Heart right ventricle (tissue), 16 donors: ENCODE measurements at regions of chr3 and their contacts with region 1.

Region 1: GRCh38 chr3:151227807-151228665 is 25.0 kb upstream of the GPR171 start:
- DNase-seq: peak; percentile 53 to 81
- ATAC-seq: peak; percentile 74 to 91 (median 86)
- H3K4me3 ChIP-seq: no peak overlapping the region
- H3K27ac ChIP-seq: peak overlapping the region in 9 of 10 donors; percentile 31 to 75 (median 65)
- H3K4me1 ChIP-seq: peaks cover 0 to 52% (median 19%) of the 10 kb centered on the region in 9 donors
- H3K27me3 ChIP-seq: no peaks in the 10 kb centered on the region
- CTCF ChIP-seq: peak; percentile 80 to 96 (median 91)

Region 2: GRCh38 chr3:151168269-151169094 is 59.6 kb before region 1 on chr3:
- intact Hi-C with region 1: loop called in 3 of 10 experiments (anchors 5 kb)
- DNase-seq: peak; percentile 78 to 83
- ATAC-seq: peak; percentile 61 to 87 (median 76)
- H3K4me3 ChIP-seq: no peak overlapping the region
- H3K27ac ChIP-seq: peak overlapping the region in 2 of 10 donors; percentile 13 to 79
- H3K4me1 ChIP-seq: peaks cover 0 to 42% (median 3%) of the 10 kb centered on the region in 9 donors
- H3K27me3 ChIP-seq: no peaks in the 10 kb centered on the region
- CTCF ChIP-seq: peak; percentile 34 to 88 (median 79)

Region 3: DNA sequence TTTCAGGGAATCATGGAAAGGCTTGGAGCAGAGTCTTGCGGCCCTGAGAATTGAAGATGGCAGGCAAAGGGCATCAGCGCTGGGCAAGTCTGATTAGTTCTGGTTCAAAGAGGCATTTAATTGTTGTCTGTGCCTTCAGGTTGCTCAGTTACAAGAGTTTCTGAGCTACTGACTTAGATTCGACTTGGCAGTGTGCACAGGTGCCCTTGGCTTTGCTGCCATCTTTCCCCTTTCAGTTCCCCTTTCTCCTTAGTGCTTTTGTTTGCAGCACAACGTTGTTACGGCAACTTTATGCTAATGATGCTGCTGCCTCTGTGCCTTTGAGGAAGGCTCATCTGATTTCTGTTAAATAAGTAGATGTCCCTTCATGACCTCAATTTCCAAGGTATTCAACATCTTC is 37.8 kb after region 1 on chr3:
- intact Hi-C with region 1: loop called in 1 of 10 experiments (anchors 5 kb)
- DNase-seq: peak in 1 of 2 donors; percentile 14
- ATAC-seq: peak in 6 of 8 donors; percentile 30 to 69 (median 50)
- H3K4me3 ChIP-seq: no peak overlapping the region
- H3K27ac ChIP-seq: peak overlapping the region in 3 of 10 donors; percentile 15 to 76 (median 53)
- H3K4me1 ChIP-seq: peaks cover 0 to 46% (median 5%) of the 10 kb centered on the region in 9 donors
- H3K27me3 ChIP-seq: no peaks in the 10 kb centered on the region
- CTCF ChIP-seq: no peak

Region 4: GRCh38 chr3:151282921-151283320 is 54.9 kb after region 1 on chr3:
- intact Hi-C with region 1: loop called (anchors 1 to 5 kb)
- DNase-seq: no peak
- ATAC-seq: peak in 6 of 8 donors; percentile 46 to 82 (median 58)
- H3K4me3 ChIP-seq: no peak overlapping the region
- H3K27ac ChIP-seq: peak overlapping the region in 5 of 10 donors; percentile 23 to 76 (median 63)
- H3K4me1 ChIP-seq: peaks cover 0 to 35% (median 9%) of the 10 kb centered on the region in 9 donors
- H3K27me3 ChIP-seq: no peaks in the 10 kb centered on the region
- CTCF ChIP-seq: peak; percentile 46 to 81 (median 70)

Region 5: GRCh38 chr3:151316267-151316991 is 88.4 kb after region 1 on chr3 and contains the start of gene GPR87:
- intact Hi-C with region 1: no loop called
- DNase-seq: no peak
- ATAC-seq: no peak
- H3K4me3 ChIP-seq: no peak within 1 kb of the TSS
- H3K27ac ChIP-seq: no peak within 1 kb of the TSS
- H3K4me1 ChIP-seq: peaks cover 0 to 25% (median 0%) of the 10 kb centered on the region in 9 donors
- H3K27me3 ChIP-seq: no peaks in the 10 kb centered on the region
- CTCF ChIP-seq: no peak
- total RNA-seq, gene GPR87: not detected

Region 6: DNA sequence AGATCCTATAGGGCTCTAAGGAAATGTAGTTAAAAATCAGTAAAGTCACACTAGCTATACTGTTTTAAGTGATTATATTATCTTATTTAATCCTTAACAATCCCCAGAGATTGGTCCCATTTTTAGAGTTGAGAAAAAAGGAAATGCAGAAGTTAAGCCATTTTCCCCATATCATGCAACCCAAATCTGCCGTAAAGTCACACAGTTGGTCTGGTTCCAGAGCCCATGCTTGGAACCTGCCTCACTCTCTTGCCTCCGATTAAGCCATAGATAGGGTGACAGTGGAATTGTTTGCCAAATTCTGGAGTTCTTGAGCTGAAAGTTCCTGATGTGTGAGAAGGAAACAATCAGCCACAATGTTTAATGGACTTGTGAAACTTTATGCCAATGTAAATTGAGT is 103.7 kb after region 1 on chr3:
- intact Hi-C with region 1: no loop called
- DNase-seq: no peak
- ATAC-seq: no peak
- H3K4me3 ChIP-seq: no peak overlapping the region
- H3K27ac ChIP-seq: peak overlapping the region in 1 of 10 donors; percentile 51
- H3K4me1 ChIP-seq: peaks cover 0 to 43% (median 0%) of the 10 kb centered on the region in 9 donors
- H3K27me3 ChIP-seq: no peaks in the 10 kb centered on the region
- CTCF ChIP-seq: no peak

Region 7: GRCh38 chr3:151918253-151919029 is 690.4 kb after region 1 on chr3:
- intact Hi-C with region 1: loop called in 1 of 10 experiments (anchors 5 kb)
- DNase-seq: no peak
- ATAC-seq: peak in 5 of 8 donors; percentile 39 to 65 (median 50)
- H3K4me3 ChIP-seq: no peak overlapping the region
- H3K27ac ChIP-seq: no peak overlapping the region
- H3K4me1 ChIP-seq: peaks cover 0 to under 1% (median 0%) of the 10 kb centered on the region in 9 donors
- H3K27me3 ChIP-seq: no peaks in the 10 kb centered on the region
- CTCF ChIP-seq: peak; percentile 33 to 78 (median 69)